ENCODE measurements at regions of chr4 and their contacts with region 1.

Region 1: DNA sequence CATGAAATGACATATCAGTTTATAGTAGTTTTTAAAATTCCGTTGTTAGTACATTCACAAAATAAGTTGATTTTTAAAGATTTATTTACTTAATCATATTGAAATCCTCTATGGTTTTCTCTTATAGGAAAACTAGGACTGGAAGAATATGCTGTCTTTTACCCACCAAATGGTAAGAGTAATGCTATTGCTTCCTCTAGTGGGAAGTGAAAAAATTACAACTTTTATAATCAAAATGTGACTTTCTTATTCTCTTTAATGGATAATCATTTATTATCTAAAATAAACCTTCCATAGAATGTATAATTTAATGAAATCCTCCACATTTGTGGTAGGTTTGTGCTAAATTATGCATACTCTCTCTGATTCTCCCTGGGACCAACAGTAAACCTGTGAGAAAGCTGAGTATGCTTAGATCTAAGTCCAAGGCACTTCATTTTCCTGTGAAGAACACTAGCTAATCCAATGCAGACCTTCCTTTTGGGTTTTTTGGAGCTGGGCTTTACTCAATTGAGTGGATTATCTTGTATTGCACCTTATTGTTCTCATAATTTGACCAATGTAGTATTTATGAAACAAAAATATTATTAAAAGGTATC is 136.2 kb downstream of the TBC1D19 start:
- DNase-seq: peak; percentile 44
- ATAC-seq: peak; percentile 27; the same call in 1 of the 2 replicates
- H3K4me3 ChIP-seq: no peak overlapping the region
- H3K27ac ChIP-seq: no peak overlapping the region
- H3K4me1 ChIP-seq: peaks cover 9% of the 10 kb centered on the region
- H3K27me3 ChIP-seq: no peaks in the 10 kb centered on the region
- CTCF ChIP-seq: peak; percentile 72

Region 2: DNA sequence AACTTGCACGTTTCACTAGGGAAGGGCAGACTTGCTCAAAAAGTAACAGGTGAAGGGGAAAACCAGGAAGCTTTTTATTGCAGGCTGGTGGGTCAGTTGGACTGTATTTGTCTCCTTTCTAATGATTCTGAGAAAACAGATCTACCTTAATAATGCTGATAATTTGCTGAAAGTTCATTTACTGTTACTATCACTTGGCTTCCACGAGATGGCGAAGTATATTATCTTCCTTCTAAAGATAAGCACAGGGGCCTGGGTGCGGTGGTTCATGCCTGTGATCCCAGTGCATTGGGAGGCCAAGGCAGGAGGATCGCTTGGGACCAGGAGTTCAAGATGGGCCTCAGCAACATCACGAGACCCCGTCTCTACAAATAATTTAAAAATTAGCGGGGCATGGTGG is 246.2 kb before region 1 on chr4:
- CTCF ChIA-PET with region 1: no interaction called
- POLR2A ChIA-PET with region 1: no interaction called
- intact Hi-C with region 1: loop called (anchors 5 kb)
- DNase-seq: no peak
- ATAC-seq: no peak
- H3K4me3 ChIP-seq: no peak overlapping the region
- H3K27ac ChIP-seq: no peak overlapping the region
- H3K4me1 ChIP-seq: no peaks in the 10 kb centered on the region
- H3K27me3 ChIP-seq: no peaks in the 10 kb centered on the region
- CTCF ChIP-seq: no peak

Region 3: DNA sequence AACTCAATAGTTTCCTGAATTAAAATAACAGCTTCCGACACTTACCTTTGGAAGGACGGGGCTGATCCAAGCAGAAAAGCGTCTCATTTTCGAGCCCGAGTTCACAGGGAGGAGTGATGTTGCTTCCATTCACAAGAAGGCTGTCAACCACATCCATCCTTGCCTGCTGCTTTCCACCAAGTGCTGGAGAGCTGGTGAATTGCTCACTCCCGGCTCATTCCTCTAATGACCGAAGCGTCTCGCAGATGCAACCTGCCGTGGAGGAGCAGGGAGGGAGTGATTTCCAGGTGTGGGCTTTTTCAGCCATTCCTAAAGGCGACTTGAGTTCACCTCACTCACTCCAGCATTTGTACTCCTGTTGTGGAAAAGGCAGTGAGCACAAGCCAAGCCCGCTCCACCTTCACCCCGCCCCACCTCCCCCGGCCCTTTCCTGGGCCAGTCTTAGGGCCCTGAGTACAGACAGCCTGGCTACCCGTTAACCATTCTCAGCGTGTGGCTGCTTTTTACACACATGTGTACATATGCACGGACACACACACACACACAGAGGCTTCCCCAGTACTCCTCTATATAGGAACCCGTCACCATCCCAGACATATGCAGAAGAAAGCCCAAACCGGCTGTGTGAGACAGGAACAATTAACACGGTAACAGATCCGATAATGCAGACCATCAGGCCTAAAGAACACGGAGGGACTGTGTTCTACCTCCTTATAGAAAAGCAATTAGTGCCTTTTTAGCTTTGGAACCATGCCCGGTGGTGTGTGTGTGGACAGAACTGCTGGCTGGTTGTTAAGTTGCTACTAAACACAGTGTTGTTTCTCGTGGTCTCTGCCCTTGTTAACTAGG is 229.7 kb before region 1 on chr4 and contains the start of gene CCKAR:
- CTCF ChIA-PET with region 1: no interaction called
- POLR2A ChIA-PET with region 1: no interaction called
- intact Hi-C with region 1: no loop called
- DNase-seq: no peak
- ATAC-seq: no peak
- H3K4me3 ChIP-seq: no peak within 1 kb of the TSS
- H3K27ac ChIP-seq: no peak within 1 kb of the TSS
- H3K4me1 ChIP-seq: no peaks in the 10 kb centered on the region
- H3K27me3 ChIP-seq: peaks cover 9% of the 10 kb centered on the region; the same call in 1 of the 2 replicates
- CTCF ChIP-seq: no peak
- total RNA-seq, gene CCKAR: not detected in 2 replicates

Region 4: DNA sequence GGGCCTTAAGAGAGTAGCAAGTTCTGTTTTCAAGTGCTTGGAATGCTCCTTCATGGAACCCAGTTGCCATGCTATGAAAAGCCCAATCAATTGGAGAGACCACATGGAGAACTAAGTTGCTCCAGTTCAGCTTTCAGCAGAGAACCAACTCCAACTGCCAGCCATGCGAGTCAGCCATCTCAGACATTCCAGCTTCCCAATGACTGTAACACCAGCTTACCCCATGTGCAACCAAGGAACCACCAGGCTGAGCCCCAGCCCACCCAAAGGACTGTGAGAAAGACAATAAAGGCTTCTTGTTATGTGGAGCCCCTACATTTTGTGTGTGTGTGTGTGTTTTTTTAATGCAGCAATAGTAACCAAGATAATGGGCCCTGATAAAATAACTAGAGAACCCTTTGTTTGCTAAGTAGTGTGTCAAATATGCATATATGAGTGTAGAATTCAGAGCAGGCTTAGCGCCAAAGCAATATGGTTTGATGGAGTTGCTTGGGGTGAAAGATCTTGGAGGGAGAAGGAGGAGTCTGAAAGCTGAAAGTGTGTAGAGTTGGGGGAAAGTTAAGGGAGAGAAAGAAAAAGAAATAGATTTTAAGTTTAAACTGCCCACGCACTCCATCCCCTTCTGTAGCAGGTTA is 194.8 kb before region 1 on chr4:
- CTCF ChIA-PET with region 1: no interaction called
- POLR2A ChIA-PET with region 1: no interaction called
- intact Hi-C with region 1: no loop called
- DNase-seq: peak; percentile 33
- ATAC-seq: no peak
- H3K4me3 ChIP-seq: no peak overlapping the region
- H3K27ac ChIP-seq: no peak overlapping the region
- H3K4me1 ChIP-seq: peaks cover 16% of the 10 kb centered on the region
- H3K27me3 ChIP-seq: no peaks in the 10 kb centered on the region
- CTCF ChIP-seq: no peak

Region 5: GRCh38 chr4:26701786-26702227 is 18.2 kb before region 1 on chr4:
- CTCF ChIA-PET with region 1: no interaction called
- POLR2A ChIA-PET with region 1: no interaction called
- intact Hi-C with region 1: no loop called
- DNase-seq: peak; percentile 45
- ATAC-seq: peak; percentile 27; the same call in 1 of the 2 replicates
- H3K4me3 ChIP-seq: no peak overlapping the region
- H3K27ac ChIP-seq: no peak overlapping the region
- H3K4me1 ChIP-seq: peaks cover 5% of the 10 kb centered on the region; the same call in 1 of the 2 replicates
- H3K27me3 ChIP-seq: no peaks in the 10 kb centered on the region
- CTCF ChIP-seq: no peak

Measured in PC-3 (cell line).